Mammary epithelial cell (primary cell): ENCODE measurements at regions of chr5 and their contacts with region 1.

Region 1: GRCh38 chr5:78648359-78649210 is at the start of gene LHFPL2:
- DNase-seq: peak; percentile 64
- H3K4me3 ChIP-seq: peak within 1 kb of the TSS; percentile 84 to 95 (median 93)
- H3K27ac ChIP-seq: peak within 1 kb of the TSS; percentile 75
- H3K4me1 ChIP-seq: peaks cover 31% of the 10 kb centered on the region
- H3K27me3 ChIP-seq: no peaks in the 10 kb centered on the region
- CTCF ChIP-seq: no peak
- total RNA-seq, gene LHFPL2: 52.5 to 53.5 TPM

Region 2: DNA sequence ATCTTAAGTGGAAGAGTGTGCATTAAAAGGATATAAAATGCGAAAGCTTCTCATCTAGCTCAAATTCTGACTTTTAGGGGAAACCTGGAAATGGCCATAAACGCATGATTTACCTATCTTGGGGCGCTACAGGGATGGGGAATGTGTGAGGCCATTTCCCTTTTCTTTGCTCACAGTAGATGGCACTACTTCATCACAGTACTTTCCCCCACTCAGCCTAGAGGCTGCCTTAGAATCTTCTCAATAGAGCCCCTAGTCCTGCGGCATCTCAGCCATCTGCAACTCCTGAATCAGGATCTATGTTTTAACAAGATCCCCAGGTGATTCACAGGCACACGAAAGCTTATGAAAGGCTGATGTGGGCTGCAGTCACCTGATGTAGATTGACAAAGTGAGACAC is 110.8 kb before region 1 on chr5:
- CTCF ChIA-PET with region 1: no interaction called
- dilution Hi-C with region 1: loop called (anchors 10 kb)
- in situ Hi-C with region 1: no loop called
- intact Hi-C with region 1: loop called (anchors 2 kb)
- DNase-seq: peak; percentile 91
- H3K4me3 ChIP-seq: no peak overlapping the region
- H3K27ac ChIP-seq: peak overlapping the region; percentile 56
- H3K4me1 ChIP-seq: peaks cover 37% of the 10 kb centered on the region
- H3K27me3 ChIP-seq: no peaks in the 10 kb centered on the region
- CTCF ChIP-seq: peak; percentile 57 to 58

Region 3: GRCh38 chr5:78638423-78638822 is 10.2 kb before region 1 on chr5:
- CTCF ChIA-PET with region 1: no interaction called
- dilution Hi-C with region 1: no loop called
- in situ Hi-C with region 1: no loop called
- intact Hi-C with region 1: loop called (anchors 1 kb)
- DNase-seq: peak; percentile 98
- H3K4me3 ChIP-seq: no peak overlapping the region
- H3K27ac ChIP-seq: peak overlapping the region; percentile 85
- H3K4me1 ChIP-seq: peaks cover 44% of the 10 kb centered on the region
- H3K27me3 ChIP-seq: no peaks in the 10 kb centered on the region
- CTCF ChIP-seq: no peak

Region 4: DNA sequence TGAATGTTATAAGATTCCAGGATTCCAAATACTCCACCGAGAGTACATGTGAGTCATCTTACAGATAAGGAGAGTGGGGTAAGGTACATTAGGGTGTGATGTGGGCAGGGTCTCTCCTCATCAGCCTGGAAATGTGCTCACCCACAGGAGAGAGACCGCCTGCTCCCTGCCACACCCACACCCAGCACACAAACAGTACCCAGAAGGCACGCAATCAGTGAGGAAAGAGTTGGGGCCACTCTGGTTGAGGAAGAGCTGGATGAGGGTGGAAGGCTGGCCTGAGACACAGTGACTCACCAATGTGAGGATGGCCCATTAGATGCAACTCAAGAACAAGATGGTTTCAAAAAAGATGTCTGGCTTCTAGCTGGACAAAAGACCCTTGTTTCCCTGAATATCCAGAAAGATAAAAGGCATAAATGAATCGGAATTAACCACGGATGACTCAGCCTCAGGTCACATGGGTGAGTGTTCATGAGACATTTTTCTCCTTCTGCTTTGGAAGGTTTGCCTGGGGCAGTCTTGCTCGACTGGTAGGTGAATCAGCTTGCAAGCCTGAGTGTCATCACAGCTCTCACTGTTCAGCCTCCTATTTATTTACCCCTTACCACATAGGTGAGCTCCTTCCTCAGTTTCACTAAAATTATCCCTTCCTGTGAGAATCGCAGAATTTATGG is 51.1 kb after region 1 on chr5:
- CTCF ChIA-PET with region 1: no interaction called
- dilution Hi-C with region 1: no loop called
- in situ Hi-C with region 1: no loop called
- intact Hi-C with region 1: loop called (anchors 1 kb)
- DNase-seq: peak; percentile 100
- H3K4me3 ChIP-seq: peak overlapping the region in 1 of 3 experiments; percentile 6
- H3K27ac ChIP-seq: peak overlapping the region; percentile 97
- H3K4me1 ChIP-seq: peaks cover 32% of the 10 kb centered on the region
- H3K27me3 ChIP-seq: no peaks in the 10 kb centered on the region
- CTCF ChIP-seq: no peak

Region 5: DNA sequence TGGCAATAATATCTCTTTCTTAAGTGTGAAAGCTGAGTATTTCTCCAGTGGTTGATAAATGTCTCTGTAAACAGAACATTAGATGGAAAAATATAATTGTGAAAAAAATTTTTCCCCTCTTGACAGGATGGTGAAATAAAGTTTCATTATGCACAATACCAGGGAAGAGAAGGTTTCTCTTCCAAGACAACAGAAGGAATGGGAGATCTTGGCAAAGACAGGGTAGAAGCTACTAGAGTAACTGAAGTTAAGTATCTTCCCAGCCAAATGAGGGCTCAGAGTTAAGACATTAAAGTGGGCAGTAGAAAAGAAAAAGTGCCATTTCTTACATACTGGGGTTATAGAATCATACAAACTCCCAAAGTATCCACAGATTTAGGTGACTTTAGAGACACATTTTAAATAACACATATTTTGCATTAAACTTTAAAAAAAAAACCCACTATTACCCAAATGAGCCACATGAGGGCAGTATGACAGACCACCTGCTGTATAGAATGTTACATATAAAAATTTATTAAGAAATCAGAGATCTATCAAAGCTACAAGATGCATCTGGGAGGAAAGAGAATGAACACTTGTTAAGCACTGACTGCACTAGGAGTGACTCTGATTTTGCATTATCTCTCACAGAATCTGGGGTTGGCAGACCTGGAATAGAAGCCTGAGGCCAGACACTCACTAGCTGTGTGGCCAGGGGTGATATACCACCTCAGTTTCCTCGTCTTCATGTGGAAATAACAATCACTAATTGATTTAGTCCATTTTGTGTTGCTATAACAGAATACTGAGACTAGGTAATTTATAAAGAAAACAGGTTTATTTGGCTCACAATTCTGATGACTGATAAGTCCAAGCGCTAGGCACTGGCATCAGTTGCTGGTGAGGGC is 238.0 kb after region 1 on chr5:
- CTCF ChIA-PET with region 1: no interaction called
- dilution Hi-C with region 1: no loop called
- in situ Hi-C with region 1: loop called in 1 of 2 experiments (anchors 25 kb)
- intact Hi-C with region 1: loop called (anchors 2 kb)
- DNase-seq: no peak
- H3K4me3 ChIP-seq: no peak overlapping the region
- H3K27ac ChIP-seq: no peak overlapping the region
- H3K4me1 ChIP-seq: peaks cover 3% of the 10 kb centered on the region
- H3K27me3 ChIP-seq: no peaks in the 10 kb centered on the region
- CTCF ChIP-seq: peak; percentile 49 to 53

Region 6: GRCh38 chr5:78964887-78965286 is 316.3 kb after region 1 on chr5:
- CTCF ChIA-PET with region 1: no interaction called
- dilution Hi-C with region 1: no loop called
- in situ Hi-C with region 1: no loop called
- intact Hi-C with region 1: loop called (anchors 5 kb)
- DNase-seq: peak; percentile 45
- H3K4me3 ChIP-seq: no peak overlapping the region
- H3K27ac ChIP-seq: no peak overlapping the region
- H3K4me1 ChIP-seq: no peaks in the 10 kb centered on the region
- H3K27me3 ChIP-seq: no peaks in the 10 kb centered on the region
- CTCF ChIP-seq: peak; percentile 18 to 61